ENCODE measurements at regions of chr14 and their contacts with region 1.

Region 1: GRCh38 chr14:31326111-31326510 is 94.2 kb downstream of the HEATR5A start:
- DNase-seq: no peak
- H3K4me3 ChIP-seq: no peak overlapping the region
- H3K27ac ChIP-seq: no peak overlapping the region
- H3K4me1 ChIP-seq: no peaks in the 10 kb centered on the region
- H3K27me3 ChIP-seq: no peaks in the 10 kb centered on the region
- CTCF ChIP-seq: 0 out of 2 replicates have a peak, but pooled peaks have one; percentile 39

Region 2: DNA sequence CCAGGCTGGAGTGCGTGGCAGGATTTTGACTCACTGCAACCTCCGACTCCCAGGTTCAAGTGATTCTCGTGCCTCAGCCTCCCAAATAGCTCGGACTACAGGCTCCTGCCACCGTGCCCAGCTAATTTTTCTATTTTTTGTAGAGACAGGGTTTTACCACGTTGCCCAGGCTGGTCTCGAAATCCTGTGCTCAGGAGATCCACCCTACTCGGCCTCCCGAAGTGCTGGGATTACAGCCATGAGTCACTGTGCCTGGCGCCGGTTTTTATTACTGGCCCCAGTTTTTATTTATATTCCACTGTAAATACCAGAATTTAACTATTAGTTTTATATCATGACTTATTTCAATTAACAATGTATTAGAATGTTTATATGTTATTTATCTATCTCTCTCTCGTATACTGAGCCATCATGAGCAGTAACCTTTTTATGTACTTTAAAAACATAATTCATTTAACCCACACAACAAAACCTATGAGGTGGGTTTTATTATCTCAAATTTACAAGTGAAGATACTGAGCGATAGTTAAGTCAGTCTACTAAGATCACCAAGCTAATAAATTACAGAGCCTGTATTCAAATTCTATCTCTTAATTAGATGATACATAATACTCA is 166.3 kb before region 1 on chr14:
- CTCF ChIA-PET with region 1: interaction called, 11 read pairs
- POLR2A ChIA-PET with region 1: no interaction called
- intact Hi-C with region 1: no loop called
- DNase-seq: no peak
- H3K4me3 ChIP-seq: no peak overlapping the region
- H3K27ac ChIP-seq: no peak overlapping the region
- H3K4me1 ChIP-seq: peaks cover 6% of the 10 kb centered on the region; the same call in 1 of the 2 replicates
- H3K27me3 ChIP-seq: no peaks in the 10 kb centered on the region
- CTCF ChIP-seq: no peak

Region 3: DNA sequence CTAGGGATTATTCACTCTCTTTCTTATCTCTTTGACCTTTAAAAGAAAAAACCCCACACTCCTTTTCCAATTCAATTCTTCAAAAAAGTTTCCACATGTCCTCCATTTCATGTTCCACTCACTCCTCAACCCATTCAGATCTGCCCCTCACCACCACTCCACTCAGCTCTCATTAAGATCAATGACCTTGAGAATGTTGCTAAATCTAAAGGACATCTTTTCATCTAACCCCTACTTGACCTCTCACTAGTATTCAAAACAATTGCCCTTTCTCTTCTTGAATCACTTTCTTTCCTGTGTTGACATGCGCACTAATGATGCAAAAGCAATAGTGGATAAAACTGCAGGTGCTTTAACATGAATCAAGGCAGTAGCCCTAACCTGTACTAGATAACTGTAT is 128.4 kb before region 1 on chr14:
- CTCF ChIA-PET with region 1: interaction called, 8 read pairs
- POLR2A ChIA-PET with region 1: no interaction called
- intact Hi-C with region 1: loop called (anchors 2 kb)
- DNase-seq: no peak
- H3K4me3 ChIP-seq: no peak overlapping the region
- H3K27ac ChIP-seq: no peak overlapping the region
- H3K4me1 ChIP-seq: no peaks in the 10 kb centered on the region
- H3K27me3 ChIP-seq: no peaks in the 10 kb centered on the region
- CTCF ChIP-seq: no peak

Region 4: GRCh38 chr14:31207755-31208545 is 118.2 kb before region 1 on chr14 and contains the start of gene HECTD1:
- CTCF ChIA-PET with region 1: no interaction called
- POLR2A ChIA-PET with region 1: interaction called, 12 read pairs
- intact Hi-C with region 1: no loop called
- DNase-seq: peak; percentile 61 to 86
- H3K4me3 ChIP-seq: peak within 1 kb of the TSS; percentile 82
- H3K27ac ChIP-seq: peak within 1 kb of the TSS; percentile 87
- H3K4me1 ChIP-seq: peaks cover 28% of the 10 kb centered on the region
- H3K27me3 ChIP-seq: no peaks in the 10 kb centered on the region
- CTCF ChIP-seq: peak; percentile 36; the same call in 1 of the 2 replicates
- total RNA-seq, gene HECTD1: 93.9 and 94.4 TPM in 2 replicates

Region 5: GRCh38 chr14:31283578-31284252 is 42.4 kb before region 1 on chr14:
- CTCF ChIA-PET with region 1: interaction called, 14 read pairs
- POLR2A ChIA-PET with region 1: no interaction called
- intact Hi-C with region 1: no loop called
- DNase-seq: no peak
- H3K4me3 ChIP-seq: no peak overlapping the region
- H3K27ac ChIP-seq: no peak overlapping the region
- H3K4me1 ChIP-seq: no peaks in the 10 kb centered on the region
- H3K27me3 ChIP-seq: no peaks in the 10 kb centered on the region
- CTCF ChIP-seq: no peak

Measured in PC-9 (cell line).